WTC11 (cell line): ENCODE measurements at regions of chr4 and their contacts with region 1.

Region 1: DNA sequence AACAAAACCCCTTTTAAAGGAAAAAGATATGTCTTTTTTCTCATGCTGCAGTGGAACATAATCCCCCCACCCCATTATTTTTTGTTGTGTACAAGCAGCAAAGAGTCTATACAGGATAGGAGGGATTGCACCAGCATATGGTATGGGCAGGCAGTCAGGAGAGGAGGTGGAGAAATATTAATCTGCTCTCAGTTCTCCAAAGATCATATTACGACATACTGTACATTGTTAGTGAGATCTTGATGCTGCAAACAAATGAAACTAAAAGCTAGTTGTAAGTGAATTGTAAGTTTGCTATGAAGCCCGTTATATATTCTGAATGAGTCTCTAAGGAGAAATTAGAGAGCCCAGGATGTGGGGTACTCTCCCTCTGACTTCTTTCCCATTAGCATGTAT is 75.3 kb downstream of the RAPGEF2 start:
- DNase-seq: no peak
- ATAC-seq: no peak
- H3K4me3 Mint-ChIP-seq: no peak overlapping the region
- H3K27ac Mint-ChIP-seq: no peak overlapping the region
- H3K4me1 Mint-ChIP-seq: peaks cover 59% of the 10 kb centered on the region
- H3K27me3 Mint-ChIP-seq: no peaks in the 10 kb centered on the region
- CTCF ChIP-seq: no peak

Region 2: DNA sequence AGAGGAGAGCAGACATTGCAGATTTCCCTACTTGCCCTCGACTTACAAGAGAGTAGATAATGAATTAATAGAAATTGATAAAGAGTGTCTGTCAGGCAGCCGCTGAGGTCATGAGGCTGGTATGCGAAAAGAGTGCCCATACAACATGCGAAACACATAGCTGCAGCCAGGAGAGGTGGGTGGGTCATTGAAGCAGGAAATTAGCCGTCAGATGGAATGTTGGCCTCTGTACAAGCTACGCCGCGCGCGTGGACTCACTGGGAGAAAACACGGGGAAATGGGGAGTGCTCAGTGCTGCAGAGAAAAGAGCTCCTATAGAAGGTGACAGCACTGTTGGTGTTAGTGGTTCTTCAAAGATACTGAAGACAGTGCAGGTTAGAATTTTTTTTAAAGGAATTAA is 49.8 kb after region 1 on chr4:
- CTCF ChIA-PET with region 1: no interaction called
- POLR2A ChIA-PET with region 1: interaction called, 10 read pairs
- DNase-seq: peak; percentile 21
- ATAC-seq: peak; percentile 72
- H3K4me3 Mint-ChIP-seq: no peak overlapping the region
- H3K27ac Mint-ChIP-seq: peak overlapping the region; percentile 21
- H3K4me1 Mint-ChIP-seq: peaks cover 60% of the 10 kb centered on the region
- H3K27me3 Mint-ChIP-seq: no peaks in the 10 kb centered on the region
- CTCF ChIP-seq: no peak